Mammary epithelial cell (primary cell): ENCODE measurements at regions of chr13 and their contacts with region 1.

Region 1: DNA sequence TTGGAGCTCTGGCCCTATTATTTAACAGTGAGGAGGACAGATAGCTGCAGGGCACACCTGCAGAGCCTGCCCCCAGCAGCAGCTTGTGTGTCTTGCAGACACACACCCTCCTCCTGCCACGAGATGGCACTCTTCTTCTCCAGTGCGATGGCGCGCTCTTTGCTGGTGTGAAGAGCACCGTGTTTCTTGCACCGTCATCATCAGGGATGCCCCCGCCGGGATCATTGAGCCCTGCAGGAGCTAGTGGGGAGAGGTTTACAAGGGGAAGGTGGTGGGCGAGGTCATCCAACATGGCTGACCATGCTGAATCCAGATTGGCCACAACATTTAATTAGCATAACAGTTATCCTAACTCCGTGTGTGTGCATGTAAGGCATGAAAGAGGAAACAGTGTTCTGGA is 105.6 kb downstream of the RAB20 start:
- DNase-seq: peak; percentile 67
- H3K4me3 ChIP-seq: no peak overlapping the region
- H3K27ac ChIP-seq: no peak overlapping the region
- H3K4me1 ChIP-seq: peaks cover 5% of the 10 kb centered on the region
- H3K27me3 ChIP-seq: no peaks in the 10 kb centered on the region
- CTCF ChIP-seq: peak; percentile 85 to 96

Region 2: GRCh38 chr13:110529522-110530311 is 73.8 kb after region 1 on chr13:
- CTCF ChIA-PET with region 1: interaction called, 10 read pairs
- dilution Hi-C with region 1: no loop called
- in situ Hi-C with region 1: no loop called
- intact Hi-C with region 1: no loop called
- DNase-seq: no peak
- H3K4me3 ChIP-seq: no peak overlapping the region
- H3K27ac ChIP-seq: no peak overlapping the region
- H3K4me1 ChIP-seq: peaks cover 19% of the 10 kb centered on the region
- H3K27me3 ChIP-seq: no peaks in the 10 kb centered on the region
- CTCF ChIP-seq: no peak

Region 3: GRCh38 chr13:110561344-110562035 is 105.5 kb after region 1 on chr13 and contains the start of gene RAB20:
- CTCF ChIA-PET with region 1: no interaction called
- dilution Hi-C with region 1: no loop called
- in situ Hi-C with region 1: no loop called
- intact Hi-C with region 1: loop called (anchors 5 kb)
- DNase-seq: peak; percentile 76
- H3K4me3 ChIP-seq: peak within 1 kb of the TSS; percentile 78 to 92 (median 90)
- H3K27ac ChIP-seq: peak within 1 kb of the TSS; percentile 77
- H3K4me1 ChIP-seq: peaks cover 13% of the 10 kb centered on the region
- H3K27me3 ChIP-seq: no peaks in the 10 kb centered on the region
- CTCF ChIP-seq: no peak
- total RNA-seq, gene RAB20: 5.5 to 6.1 TPM

Region 4: GRCh38 chr13:110593430-110594130 is 137.6 kb after region 1 on chr13:
- CTCF ChIA-PET with region 1: no interaction called
- dilution Hi-C with region 1: no loop called
- in situ Hi-C with region 1: no loop called
- intact Hi-C with region 1: loop called (anchors 10 kb)
- DNase-seq: peak; percentile 39
- H3K4me3 ChIP-seq: no peak overlapping the region
- H3K27ac ChIP-seq: no peak overlapping the region
- H3K4me1 ChIP-seq: peaks cover 16% of the 10 kb centered on the region
- H3K27me3 ChIP-seq: no peaks in the 10 kb centered on the region
- CTCF ChIP-seq: peak; percentile 51 to 61

Region 5: GRCh38 chr13:110615322-110616102 is 159.6 kb after region 1 on chr13 and contains the start of gene NAXD:
- CTCF ChIA-PET with region 1: no interaction called
- dilution Hi-C with region 1: no loop called
- in situ Hi-C with region 1: no loop called
- intact Hi-C with region 1: loop called (anchors 5 kb)
- DNase-seq: peak; percentile 93
- H3K4me3 ChIP-seq: peak within 1 kb of the TSS; percentile 62 to 83 (median 70)
- H3K27ac ChIP-seq: peak within 1 kb of the TSS; percentile 52
- H3K4me1 ChIP-seq: peaks cover 28% of the 10 kb centered on the region
- H3K27me3 ChIP-seq: no peaks in the 10 kb centered on the region
- CTCF ChIP-seq: no peak
- total RNA-seq, gene NAXD: 18.3 to 27.0 TPM

Region 6: DNA sequence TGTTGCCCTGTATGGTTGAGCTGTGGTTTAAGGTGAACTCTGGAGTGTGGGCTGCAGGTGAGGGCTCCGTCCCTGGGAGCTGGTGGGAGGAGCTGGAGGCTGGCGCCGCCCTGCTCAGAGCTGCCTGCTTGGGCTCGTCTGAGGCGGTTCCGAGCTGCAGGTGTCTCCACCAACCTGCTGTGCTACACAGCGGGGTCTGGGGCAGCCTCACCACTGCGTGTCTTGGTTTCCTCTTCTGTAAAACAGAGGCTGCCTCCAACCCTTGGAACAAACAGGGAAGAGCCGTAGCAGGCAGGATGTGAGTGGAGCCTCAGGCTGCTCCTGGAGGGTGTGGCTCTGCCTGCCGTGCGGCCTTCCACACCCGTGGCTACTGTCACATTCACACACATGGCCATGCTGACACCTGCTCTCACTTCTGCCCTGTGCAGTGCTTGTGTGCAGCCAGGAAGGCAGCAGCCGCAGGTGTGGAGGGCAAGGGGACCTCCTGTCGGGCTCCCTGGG is 180.8 kb after region 1 on chr13:
- CTCF ChIA-PET with region 1: no interaction called
- dilution Hi-C with region 1: no loop called
- in situ Hi-C with region 1: no loop called
- intact Hi-C with region 1: loop called (anchors 5 kb)
- DNase-seq: no peak
- H3K4me3 ChIP-seq: no peak overlapping the region
- H3K27ac ChIP-seq: no peak overlapping the region
- H3K4me1 ChIP-seq: no peaks in the 10 kb centered on the region
- H3K27me3 ChIP-seq: no peaks in the 10 kb centered on the region
- CTCF ChIP-seq: no peak

Region 7: GRCh38 chr13:110715395-110716235 is 259.7 kb after region 1 on chr13:
- CTCF ChIA-PET with region 1: no interaction called
- dilution Hi-C with region 1: no loop called
- in situ Hi-C with region 1: no loop called
- intact Hi-C with region 1: loop called (anchors 10 kb)
- DNase-seq: peak; percentile 100
- H3K4me3 ChIP-seq: peak overlapping the region; percentile 72 to 87 (median 73)
- H3K27ac ChIP-seq: peak overlapping the region; percentile 75
- H3K4me1 ChIP-seq: peaks cover 15% of the 10 kb centered on the region
- H3K27me3 ChIP-seq: no peaks in the 10 kb centered on the region
- CTCF ChIP-seq: peak in 1 of 2 donors; percentile 18

Region 8: DNA sequence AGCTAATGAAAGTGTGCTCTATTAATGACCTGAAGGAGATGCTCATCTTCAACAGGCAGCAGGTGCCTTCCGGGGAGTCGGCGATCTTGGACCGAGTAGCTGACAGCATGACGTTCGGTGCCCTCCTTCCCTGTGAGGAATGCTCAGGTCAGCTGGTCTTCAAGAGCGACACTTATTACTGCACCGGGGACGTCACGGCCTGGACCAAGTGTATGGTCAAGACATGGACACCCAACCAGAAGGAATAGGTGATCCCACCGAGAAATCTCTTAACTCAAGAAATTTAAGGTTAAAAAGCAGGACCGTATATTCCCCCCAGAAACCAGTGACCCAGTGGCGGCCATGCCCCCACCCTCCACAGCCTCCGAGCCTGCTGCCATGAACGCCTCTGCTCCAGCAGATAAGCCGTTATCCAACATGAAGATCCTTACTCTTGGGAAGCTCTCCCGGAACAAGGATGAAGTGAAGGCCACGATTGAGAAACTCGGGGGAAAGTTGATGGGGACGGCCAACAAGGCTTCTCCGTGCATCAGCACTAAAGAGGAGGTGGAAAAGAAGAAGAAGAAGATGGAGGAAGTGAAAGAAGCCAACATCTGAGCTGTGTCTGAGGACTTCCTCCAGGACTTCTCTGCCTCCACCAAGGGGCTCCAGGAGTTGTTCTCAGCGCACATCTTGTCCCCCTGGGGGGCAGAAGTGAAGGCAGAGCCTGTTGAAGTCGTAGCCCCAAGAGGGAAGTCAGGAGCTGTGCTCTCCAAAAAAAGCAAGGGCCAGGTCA is 481.8 kb after region 1 on chr13:
- CTCF ChIA-PET with region 1: no interaction called
- dilution Hi-C with region 1: no loop called
- in situ Hi-C with region 1: no loop called
- intact Hi-C with region 1: no loop called
- DNase-seq: no peak
- H3K4me3 ChIP-seq: no peak overlapping the region
- H3K27ac ChIP-seq: no peak overlapping the region
- H3K4me1 ChIP-seq: no peaks in the 10 kb centered on the region
- H3K27me3 ChIP-seq: no peaks in the 10 kb centered on the region
- CTCF ChIP-seq: no peak